ENCODE measurements at regions of chr16 and their contacts with region 1.

Region 1: DNA sequence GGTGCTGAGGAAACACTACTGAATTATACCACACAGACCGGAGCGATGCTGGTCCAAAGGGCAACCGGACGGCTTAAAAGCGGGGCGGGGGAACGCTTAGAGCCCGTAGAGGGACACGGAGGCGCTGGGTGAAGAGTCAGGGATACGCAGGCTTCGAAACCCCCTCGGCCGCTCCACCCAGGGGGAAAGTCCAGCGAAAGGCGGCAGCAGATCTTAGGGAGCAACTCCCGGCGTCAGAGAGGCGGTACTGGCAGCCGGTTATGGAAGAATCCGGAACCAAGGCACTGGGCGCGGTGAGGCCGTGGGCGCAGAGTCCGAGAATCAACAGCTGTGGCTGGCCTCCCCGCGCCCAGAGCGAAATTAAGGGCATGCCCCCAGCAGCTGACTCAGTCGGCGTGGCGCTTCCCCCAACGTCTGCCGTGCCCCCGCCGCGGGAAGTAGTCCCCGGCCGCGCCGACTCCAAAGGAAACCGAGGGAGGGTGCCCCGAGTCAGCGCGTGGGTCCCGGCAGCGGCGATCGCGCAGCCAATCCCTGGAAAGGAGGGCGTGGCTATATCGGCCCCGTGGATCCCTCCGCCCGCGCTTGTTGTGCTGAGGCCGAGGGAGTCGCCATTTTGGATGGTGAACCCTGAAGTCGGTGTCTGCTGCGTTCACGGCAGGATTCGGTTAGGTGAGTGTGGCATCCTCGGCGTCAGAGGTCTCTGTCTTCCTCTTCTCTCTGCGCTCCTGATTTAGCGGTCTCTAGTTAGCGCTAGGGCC is at the start of gene IST1:
- DNase-seq: peak; percentile 99
- ATAC-seq: peak; percentile 98
- total RNA-seq, gene IST1: 114 TPM

Region 2: DNA sequence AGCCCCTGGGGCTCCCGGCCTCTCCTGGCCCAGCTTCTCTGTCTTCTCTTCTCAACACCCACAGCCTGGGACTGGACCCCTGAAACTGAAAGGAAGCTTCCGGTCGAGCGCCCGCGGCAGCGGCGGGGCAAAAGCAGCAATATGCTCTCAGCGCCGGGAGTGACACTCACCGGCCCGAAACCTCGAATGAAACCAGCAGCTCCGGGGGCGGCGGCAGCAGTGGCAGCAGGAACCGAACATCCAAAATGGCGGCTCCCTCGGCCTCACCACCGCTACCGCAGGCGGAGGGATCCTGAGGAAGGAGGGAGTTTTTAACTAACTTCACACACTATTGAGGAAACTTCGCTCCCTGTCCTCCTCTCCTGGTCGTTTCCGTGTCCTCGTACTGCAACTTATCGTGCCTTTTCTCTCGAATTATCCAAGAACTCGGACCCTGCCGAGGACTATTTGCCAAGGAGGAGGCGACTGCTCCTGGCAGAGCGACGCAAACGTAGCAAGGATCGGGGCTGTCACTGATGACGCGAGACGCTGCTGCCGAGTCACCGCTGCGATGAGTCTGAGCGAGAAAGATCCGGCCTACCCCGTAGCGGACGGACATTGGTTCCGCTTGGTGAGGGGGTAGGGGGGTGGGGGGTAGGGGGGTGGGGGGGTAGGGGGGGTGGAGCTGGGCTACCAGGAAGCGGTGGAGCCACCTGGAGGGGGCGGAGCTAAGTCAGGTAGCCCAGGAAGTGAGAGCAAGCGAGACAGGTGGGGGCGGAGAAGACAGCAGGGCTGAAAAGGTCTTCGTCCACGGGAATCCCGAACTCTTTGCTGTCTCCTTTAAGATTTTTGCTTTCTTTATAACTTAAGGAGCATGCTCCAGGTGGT is 86.3 kb before region 1 on chr16 and contains the start of gene AP1G1:
- intact Hi-C with region 1: loop called (anchors 1 kb)
- DNase-seq: peak; percentile 98
- ATAC-seq: peak; percentile 99
- total RNA-seq, gene AP1G1: 28.1 TPM

Region 3: DNA sequence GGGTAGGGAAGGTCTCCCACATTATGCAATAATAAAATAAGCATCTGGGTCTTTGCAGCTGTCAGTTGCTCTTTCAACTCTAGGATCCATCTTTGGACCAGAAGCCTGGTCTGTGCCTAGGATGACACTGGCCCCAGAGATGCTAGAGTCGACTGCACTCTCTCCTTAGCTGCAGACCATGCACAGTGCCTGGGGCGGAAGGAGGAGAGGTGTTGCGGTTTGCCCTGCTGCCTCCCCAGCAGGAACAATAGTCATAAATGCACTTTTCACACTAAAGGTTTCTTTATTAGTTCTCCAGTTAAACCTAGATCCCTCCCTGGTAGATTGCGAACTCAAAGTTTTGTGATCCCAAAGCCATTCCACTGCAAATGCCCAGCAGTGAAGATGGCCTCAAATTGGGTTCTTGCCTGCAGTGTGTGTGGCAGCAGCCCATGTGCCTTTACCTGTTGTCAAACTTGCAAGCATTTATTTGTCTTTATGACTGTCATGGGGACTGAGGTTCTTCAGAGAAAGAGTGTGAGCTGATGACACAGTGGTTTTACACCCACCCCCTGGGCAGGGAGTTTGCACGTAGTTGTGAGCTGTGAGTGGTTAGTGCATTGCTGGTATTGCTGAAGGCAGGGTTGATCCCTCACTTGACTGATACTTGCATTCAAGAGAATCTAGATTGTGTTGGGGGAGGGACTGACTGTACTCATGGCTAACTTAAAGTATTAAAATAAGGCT is 39.0 kb before region 1 on chr16:
- intact Hi-C with region 1: no loop called
- DNase-seq: no peak
- ATAC-seq: no peak

Region 4: DNA sequence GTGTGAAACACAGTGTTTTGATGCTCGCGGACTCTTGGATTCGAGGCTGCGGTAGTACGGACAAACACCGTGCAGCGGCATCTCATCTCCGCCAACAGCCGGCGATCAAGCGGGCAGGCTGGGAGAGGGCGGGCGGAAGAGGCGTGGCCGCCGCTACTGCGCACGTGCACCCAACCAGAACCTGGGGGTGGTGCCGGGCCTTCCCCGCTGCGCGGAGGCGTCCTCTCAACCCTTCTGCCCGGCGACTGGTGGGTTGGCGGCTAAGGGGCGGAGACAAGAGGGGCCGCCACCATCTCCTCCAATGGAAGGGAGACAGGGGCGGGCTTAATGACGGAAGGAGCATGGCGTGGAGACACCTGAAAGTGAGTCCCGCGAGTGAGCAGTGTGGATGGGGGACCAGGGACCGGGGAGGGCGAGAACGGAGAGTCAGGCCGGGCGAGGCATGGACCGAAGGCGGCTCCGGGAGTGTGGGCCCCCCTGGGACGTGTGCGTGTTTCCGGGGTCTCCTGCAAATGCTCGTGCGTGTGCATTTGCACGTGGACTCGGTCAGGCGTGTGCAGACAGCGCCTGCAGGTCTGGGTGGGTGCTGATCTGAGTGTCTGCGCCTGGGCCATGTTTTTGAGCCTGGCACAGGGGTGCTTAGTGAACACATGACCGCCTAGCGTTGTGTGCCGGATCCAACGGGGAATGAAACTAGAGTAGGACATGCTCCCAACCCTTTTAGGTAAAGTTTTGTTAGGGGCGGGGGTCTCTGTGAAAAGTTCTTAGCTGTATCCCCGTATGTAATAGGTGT is 113.5 kb after region 1 on chr16 and contains the start of gene DHODH:
- intact Hi-C with region 1: loop called (anchors 5 kb)
- DNase-seq: peak; percentile 99
- ATAC-seq: peak; percentile 100
- total RNA-seq, gene DHODH: 8.3 TPM